ENCODE measurements at regions of chr5 and their contacts with region 1.

Region 1: DNA sequence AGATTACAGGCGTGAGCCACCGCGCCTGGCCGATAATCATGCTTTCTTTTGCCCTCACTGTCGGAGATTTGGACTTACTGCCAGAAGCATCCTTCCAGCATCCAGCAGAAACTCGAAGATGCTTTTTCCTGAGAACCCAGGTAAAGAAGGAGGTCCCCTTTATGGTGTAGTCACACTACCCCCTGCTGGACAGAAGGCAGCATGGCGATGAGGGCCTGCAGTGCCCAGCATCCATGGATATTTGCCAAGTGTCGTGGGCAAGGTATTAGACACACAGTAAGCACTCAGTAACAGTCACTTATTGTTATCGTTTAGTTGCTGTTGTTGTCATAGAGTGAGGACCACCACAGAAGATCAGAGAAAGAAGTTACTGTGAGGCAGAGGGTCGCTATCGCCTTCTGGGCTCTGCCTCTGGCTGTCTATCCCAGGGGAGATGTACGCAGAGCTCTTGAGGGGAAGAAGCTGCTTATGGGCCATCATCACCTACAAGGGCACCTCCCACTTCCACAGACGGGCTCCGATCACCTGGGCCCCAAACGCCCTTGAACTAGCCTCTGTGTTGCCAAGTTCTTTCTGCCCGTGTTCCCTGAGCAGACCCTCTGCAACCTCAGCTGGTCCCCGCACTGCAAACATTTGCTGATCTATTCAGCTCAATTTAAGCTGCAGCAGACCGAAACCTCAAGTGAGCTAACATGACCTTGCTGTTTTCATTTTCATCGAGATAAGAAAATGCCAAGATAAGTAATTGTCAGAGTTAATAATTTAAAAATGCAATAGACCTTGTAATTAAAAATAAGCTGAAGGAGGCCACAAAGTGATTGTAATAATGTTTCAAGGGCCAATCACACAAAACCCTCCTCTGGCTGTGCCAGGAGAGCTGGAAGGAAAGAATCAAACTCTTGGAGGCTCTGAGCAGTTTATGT is 23.9 kb downstream of the C5orf15 start:
- DNase-seq: peak; percentile 81
- H3K4me3 ChIP-seq: peak overlapping the region in 1 of 2 experiments; percentile 40; a peak in 1 of 4 replicates
- H3K27ac ChIP-seq: no peak overlapping the region
- H3K4me1 ChIP-seq: no peaks in the 10 kb centered on the region
- H3K27me3 ChIP-seq: no peaks in the 10 kb centered on the region
- CTCF ChIP-seq: peak; percentile 77
- EP300 ChIP-seq: no peak
- RAD21 ChIP-seq: peak; percentile 96

Region 2: DNA sequence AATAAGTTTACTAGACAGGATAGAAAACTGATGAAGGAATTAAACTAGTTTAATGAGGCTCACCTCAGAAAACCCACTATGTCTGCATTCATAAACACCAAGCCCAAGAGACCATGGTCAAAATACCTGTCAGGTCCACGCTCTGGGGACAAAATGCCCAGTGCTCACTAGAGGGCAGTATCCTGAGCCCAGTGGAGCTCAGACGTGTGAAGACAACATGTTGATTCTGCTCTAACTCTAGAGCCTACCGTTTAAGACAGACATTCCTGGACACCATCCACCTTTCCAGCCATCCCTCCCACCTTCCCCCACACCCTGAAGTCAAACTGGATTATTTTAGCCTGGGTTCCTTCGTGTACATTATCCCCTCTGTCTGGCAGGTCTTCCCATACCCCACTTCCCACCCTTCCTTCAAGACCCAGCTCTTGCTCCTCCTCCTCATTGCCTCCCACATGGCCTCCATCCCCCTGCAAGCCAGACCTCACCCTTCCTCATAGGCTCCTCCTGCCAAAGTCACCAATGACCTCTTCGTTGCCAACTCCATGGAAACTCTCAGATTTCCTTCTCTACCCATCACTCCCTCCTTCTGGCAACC is 189.9 kb before region 1 on chr5:
- CTCF ChIA-PET with region 1: interaction called, 14 read pairs
- POLR2A ChIA-PET with region 1: no interaction called
- DNase-seq: no peak
- H3K4me3 ChIP-seq: no peak overlapping the region
- H3K27ac ChIP-seq: no peak overlapping the region
- H3K4me1 ChIP-seq: peaks cover 0 to 10% of the 10 kb centered on the region in 2 experiments; a peak in 1 of 4 replicates
- H3K27me3 ChIP-seq: peaks cover 5% of the 10 kb centered on the region; the same call in 1 of the 2 replicates
- CTCF ChIP-seq: peak; percentile 56
- EP300 ChIP-seq: no peak
- RAD21 ChIP-seq: peak; percentile 49

Region 3: GRCh38 chr5:133884569-133885311 is 59.8 kb before region 1 on chr5:
- CTCF ChIA-PET with region 1: interaction called, 11 read pairs
- POLR2A ChIA-PET with region 1: no interaction called
- DNase-seq: no peak
- H3K4me3 ChIP-seq: no peak overlapping the region
- H3K27ac ChIP-seq: no peak overlapping the region
- H3K4me1 ChIP-seq: peaks cover 11 to 28% of the 10 kb centered on the region in 2 experiments; a peak in 2 of 4 replicates
- H3K27me3 ChIP-seq: no peaks in the 10 kb centered on the region; the same call in 1 of the 2 replicates
- CTCF ChIP-seq: no peak
- EP300 ChIP-seq: no peak
- RAD21 ChIP-seq: no peak

Region 4: GRCh38 chr5:134140530-134141201 is 196.1 kb after region 1 on chr5:
- CTCF ChIA-PET with region 1: no interaction called
- POLR2A ChIA-PET with region 1: no interaction called
- DNase-seq: peak; percentile 80
- H3K4me3 ChIP-seq: no peak overlapping the region
- H3K27ac ChIP-seq: peak overlapping the region in 1 of 2 experiments; percentile 71; a peak in 2 of 4 replicates
- H3K4me1 ChIP-seq: peaks cover 11 to 21% of the 10 kb centered on the region in 2 experiments; a peak in 3 of 4 replicates
- H3K27me3 ChIP-seq: no peaks in the 10 kb centered on the region
- CTCF ChIP-seq: peak; percentile 79
- EP300 ChIP-seq: no peak
- RAD21 ChIP-seq: peak; percentile 75